ENCODE measurements at regions of chr2 and their contacts with region 1.

Region 1: GRCh38 chr2:172465417-172466334 is 38.3 kb downstream of the ITGA6 start:
- DNase-seq: peak; percentile 85
- ATAC-seq: peak; percentile 47
- H3K4me3 Mint-ChIP-seq: peak overlapping the region; percentile 11
- H3K27ac Mint-ChIP-seq: peak overlapping the region; percentile 60
- H3K4me1 Mint-ChIP-seq: peaks cover 62% of the 10 kb centered on the region
- H3K27me3 Mint-ChIP-seq: no peaks in the 10 kb centered on the region

Region 2: GRCh38 chr2:171574149-171574795 is 891.4 kb before region 1 on chr2:
- CTCF ChIA-PET with region 1: no interaction called
- POLR2A ChIA-PET with region 1: no interaction called
- intact Hi-C with region 1: loop called (anchors 1 to 10 kb)
- DNase-seq: peak; percentile 91
- ATAC-seq: peak; percentile 100
- H3K4me3 Mint-ChIP-seq: no peak overlapping the region
- H3K27ac Mint-ChIP-seq: no peak overlapping the region
- H3K4me1 Mint-ChIP-seq: peaks cover 6% of the 10 kb centered on the region
- H3K27me3 Mint-ChIP-seq: no peaks in the 10 kb centered on the region

Region 3: DNA sequence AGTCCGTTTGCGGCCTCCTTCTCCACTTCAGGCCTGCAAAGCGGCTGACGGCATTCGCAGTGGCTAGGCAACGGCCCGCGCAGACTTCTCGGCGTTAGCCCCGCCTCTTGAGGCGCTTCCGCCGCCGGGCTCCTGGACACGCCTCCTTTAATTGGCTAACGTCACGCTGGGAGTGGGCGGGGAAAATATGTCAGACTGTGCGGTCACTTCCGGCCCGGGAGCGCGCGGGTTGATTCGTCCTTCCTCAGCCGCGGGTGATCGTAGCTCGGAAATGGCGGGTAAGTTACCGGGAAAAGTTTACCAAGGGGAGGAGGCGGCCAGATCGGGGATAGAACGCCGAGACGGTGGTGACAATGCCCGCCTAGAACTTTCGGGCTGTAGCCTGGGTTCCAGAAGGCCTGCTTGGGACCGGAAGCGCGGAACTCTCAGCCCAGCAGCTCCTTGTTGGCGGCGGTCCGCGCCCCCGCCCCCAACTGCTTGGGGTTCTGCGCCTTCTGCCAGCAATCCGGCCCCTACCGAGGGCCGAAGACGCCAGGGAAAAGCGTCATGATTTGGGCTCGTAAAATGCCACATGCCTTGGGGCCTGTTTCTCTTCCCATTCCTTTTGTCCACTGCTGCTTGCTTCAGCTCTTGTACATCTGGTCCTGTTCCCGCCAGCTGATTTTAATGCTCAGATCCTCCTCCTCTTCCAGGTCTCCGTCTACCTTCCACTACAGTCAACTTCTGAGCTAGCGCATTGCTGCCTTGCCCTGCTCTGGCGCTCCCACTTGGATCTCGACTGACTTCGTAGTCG is 543.2 kb before region 1 on chr2 and contains the start of gene HAT1:
- CTCF ChIA-PET with region 1: no interaction called
- POLR2A ChIA-PET with region 1: no interaction called
- intact Hi-C with region 1: loop called in 1 of 2 experiments (anchors 5 kb)
- DNase-seq: peak; percentile 99
- ATAC-seq: peak; percentile 96
- H3K4me3 Mint-ChIP-seq: peak within 1 kb of the TSS; percentile 94
- H3K27ac Mint-ChIP-seq: peak within 1 kb of the TSS; percentile 98
- H3K4me1 Mint-ChIP-seq: peaks cover 38% of the 10 kb centered on the region
- H3K27me3 Mint-ChIP-seq: no peaks in the 10 kb centered on the region
- total RNA-seq, gene HAT1: 88.5 to 92.6 TPM

Region 4: GRCh38 chr2:172131713-172132555 is 333.7 kb before region 1 on chr2:
- CTCF ChIA-PET with region 1: interaction called, 19 read pairs
- POLR2A ChIA-PET with region 1: no interaction called
- intact Hi-C with region 1: loop called in 1 of 2 experiments (anchors 2 kb)
- DNase-seq: no peak
- ATAC-seq: no peak
- H3K4me3 Mint-ChIP-seq: no peak overlapping the region
- H3K27ac Mint-ChIP-seq: no peak overlapping the region
- H3K4me1 Mint-ChIP-seq: no peaks in the 10 kb centered on the region
- H3K27me3 Mint-ChIP-seq: peaks cover 2% of the 10 kb centered on the region

Region 5: DNA sequence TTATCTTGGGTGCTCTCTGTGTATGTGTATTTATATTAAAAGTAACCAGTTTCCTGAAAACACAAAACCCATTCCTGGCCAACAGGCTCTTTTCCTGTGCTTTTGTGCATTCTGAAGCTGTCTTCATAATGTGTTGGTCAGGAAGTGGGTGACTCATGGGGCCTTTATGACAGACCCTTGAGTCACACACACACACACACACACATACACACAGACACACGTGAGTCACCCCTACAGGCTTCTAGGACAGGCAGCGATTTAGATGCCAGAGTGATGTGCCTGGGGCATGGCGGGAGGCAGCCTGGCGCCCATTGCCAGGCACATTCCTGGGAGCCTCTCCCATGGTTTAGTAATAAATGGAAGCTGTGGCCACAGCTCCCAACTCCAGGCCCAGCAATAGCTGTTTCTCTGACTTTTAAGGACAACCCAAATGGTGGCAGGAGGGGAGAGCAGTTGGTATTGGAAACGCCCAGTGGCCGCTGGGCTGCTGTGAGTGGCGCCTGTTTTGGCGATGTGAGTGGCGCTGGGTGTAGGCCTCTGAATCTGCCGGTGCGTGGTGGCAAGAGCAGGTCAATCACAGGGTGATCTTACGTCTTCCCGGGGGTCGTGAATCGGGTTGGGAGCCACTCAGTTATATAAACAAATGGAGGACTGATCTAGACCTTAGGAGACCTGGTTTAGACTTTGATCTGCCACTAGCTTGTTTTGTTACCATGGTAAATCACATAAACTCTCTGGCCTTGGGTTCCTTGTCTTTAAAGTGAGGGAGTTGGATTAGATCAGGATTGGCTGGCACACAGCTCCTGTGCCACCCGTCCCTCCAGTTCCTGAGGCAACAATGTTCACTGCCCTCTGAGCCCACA is 212.3 kb before region 1 on chr2:
- CTCF ChIA-PET with region 1: interaction called, 3 read pairs
- POLR2A ChIA-PET with region 1: no interaction called
- intact Hi-C with region 1: loop called (anchors 1 to 5 kb)
- DNase-seq: peak; percentile 91
- ATAC-seq: peak; percentile 96
- H3K4me3 Mint-ChIP-seq: no peak overlapping the region
- H3K27ac Mint-ChIP-seq: peak overlapping the region; percentile 40
- H3K4me1 Mint-ChIP-seq: peaks cover 36% of the 10 kb centered on the region
- H3K27me3 Mint-ChIP-seq: peaks cover 9% of the 10 kb centered on the region

Region 6: DNA sequence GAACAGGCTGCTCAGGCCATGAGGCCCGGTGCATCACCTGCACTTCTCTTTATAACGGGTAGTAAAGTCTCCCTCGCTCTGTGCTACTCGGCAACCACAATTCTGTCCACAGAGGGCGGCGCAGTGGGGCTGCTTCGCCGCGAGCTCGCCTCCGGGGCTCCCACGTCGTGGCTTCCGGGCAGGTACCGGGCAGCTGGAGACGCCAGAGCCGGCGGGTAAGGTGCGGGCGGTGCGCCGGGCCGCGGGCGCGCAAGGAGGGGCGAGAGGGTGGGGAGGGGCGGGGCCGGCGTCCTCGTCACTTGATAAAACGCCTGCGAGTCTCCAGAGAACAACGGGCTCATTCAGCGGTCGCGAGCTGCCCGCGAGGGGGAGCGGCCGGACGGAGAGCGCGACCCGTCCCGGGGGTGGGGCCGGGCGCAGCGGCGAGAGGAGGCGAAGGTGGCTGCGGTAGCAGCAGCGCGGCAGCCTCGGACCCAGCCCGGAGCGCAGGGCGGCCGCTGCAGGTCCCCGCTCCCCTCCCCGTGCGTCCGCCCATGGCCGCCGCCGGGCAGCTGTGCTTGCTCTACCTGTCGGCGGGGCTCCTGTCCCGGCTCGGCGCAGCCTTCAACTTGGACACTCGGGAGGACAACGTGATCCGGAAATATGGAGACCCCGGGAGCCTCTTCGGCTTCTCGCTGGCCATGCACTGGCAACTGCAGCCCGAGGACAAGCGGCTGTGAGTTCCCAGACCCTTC is 38.3 kb before region 1 on chr2 and contains the start of gene ITGA6:
- CTCF ChIA-PET with region 1: interaction called, 405 read pairs
- POLR2A ChIA-PET with region 1: interaction called, 4 read pairs
- intact Hi-C with region 1: loop called (anchors 1 kb)
- DNase-seq: peak; percentile 85
- ATAC-seq: peak; percentile 59
- H3K4me3 Mint-ChIP-seq: peak within 1 kb of the TSS; percentile 80
- H3K27ac Mint-ChIP-seq: peak within 1 kb of the TSS; percentile 73
- H3K4me1 Mint-ChIP-seq: peaks cover 79% of the 10 kb centered on the region
- H3K27me3 Mint-ChIP-seq: peaks cover 2% of the 10 kb centered on the region
- total RNA-seq, gene ITGA6: 7.8 to 7.9 TPM

Region 7: GRCh38 chr2:172484253-172484652 is 18.6 kb after region 1 on chr2:
- CTCF ChIA-PET with region 1: interaction called, 27 read pairs
- POLR2A ChIA-PET with region 1: no interaction called
- intact Hi-C with region 1: no loop called
- DNase-seq: no peak
- ATAC-seq: peak; percentile 37
- H3K4me3 Mint-ChIP-seq: no peak overlapping the region
- H3K27ac Mint-ChIP-seq: no peak overlapping the region
- H3K4me1 Mint-ChIP-seq: peaks cover 44% of the 10 kb centered on the region
- H3K27me3 Mint-ChIP-seq: no peaks in the 10 kb centered on the region

Measured in activated CD4-positive, alpha-beta T cell treated with anti-CD3 and anti-CD28 coated beads for 36 hours (primary cell).